OCI-LY7 (cell line): ENCODE measurements at regions of chr5 and their contacts with region 1.

Region 1: GRCh38 chr5:102778478-102778877 is 23.4 kb downstream of the PAM start:
- DNase-seq: no peak
- H3K4me3 ChIP-seq: no peak overlapping the region
- H3K27ac ChIP-seq: no peak overlapping the region
- H3K4me1 ChIP-seq: no peaks in the 10 kb centered on the region
- CTCF ChIP-seq: no peak

Region 2: DNA sequence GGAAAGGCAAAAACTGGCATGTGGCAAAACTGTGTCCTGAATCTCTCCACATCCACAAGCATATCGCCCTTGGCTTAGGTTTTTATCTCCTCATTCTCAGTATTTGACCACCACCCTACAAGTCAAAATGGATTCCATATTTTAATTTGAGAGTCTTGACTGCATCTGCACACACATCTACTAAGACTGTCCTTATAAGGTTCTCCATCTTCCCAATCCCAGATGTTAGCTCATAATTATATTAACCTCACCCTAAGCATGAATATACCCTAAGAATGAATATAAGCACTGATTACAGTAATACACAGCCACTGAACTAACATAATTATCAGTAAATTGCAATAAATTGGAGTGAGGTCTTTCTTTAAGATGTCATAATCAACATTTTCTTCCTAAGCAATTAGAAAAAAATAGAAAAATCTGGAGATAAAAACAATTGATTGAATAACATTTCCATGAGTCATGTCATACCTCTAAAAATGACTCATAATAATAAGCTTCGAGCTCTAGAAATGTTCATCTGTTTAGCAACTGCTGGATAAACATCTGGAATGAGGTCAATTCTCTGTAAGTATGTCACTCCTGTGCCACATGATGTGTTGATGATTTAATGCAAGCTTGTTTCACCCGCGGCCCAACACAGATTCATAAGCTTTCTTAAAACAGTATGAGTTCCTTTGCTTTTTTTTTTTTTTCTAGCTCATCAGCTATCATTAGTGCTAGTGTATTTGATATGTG is 63.2 kb before region 1 on chr5:
- CTCF ChIA-PET with region 1: no interaction called
- POLR2A ChIA-PET with region 1: no interaction called
- intact Hi-C with region 1: no loop called
- DNase-seq: no peak
- H3K4me3 ChIP-seq: no peak overlapping the region
- H3K27ac ChIP-seq: no peak overlapping the region
- H3K4me1 ChIP-seq: no peaks in the 10 kb centered on the region
- CTCF ChIP-seq: no peak

Region 3: GRCh38 chr5:102823441-102823874 is 45.0 kb after region 1 on chr5:
- CTCF ChIA-PET with region 1: no interaction called
- POLR2A ChIA-PET with region 1: no interaction called
- intact Hi-C with region 1: no loop called
- DNase-seq: no peak
- H3K4me3 ChIP-seq: no peak overlapping the region
- H3K27ac ChIP-seq: no peak overlapping the region
- H3K4me1 ChIP-seq: no peaks in the 10 kb centered on the region
- CTCF ChIP-seq: no peak

Region 4: GRCh38 chr5:103041071-103041676 is 262.7 kb after region 1 on chr5:
- CTCF ChIA-PET with region 1: no interaction called
- POLR2A ChIA-PET with region 1: no interaction called
- intact Hi-C with region 1: loop called (anchors 5 kb)
- DNase-seq: peak; percentile 15
- H3K4me3 ChIP-seq: no peak overlapping the region
- H3K27ac ChIP-seq: no peak overlapping the region
- H3K4me1 ChIP-seq: no peaks in the 10 kb centered on the region
- CTCF ChIP-seq: peak; percentile 55

Region 5: DNA sequence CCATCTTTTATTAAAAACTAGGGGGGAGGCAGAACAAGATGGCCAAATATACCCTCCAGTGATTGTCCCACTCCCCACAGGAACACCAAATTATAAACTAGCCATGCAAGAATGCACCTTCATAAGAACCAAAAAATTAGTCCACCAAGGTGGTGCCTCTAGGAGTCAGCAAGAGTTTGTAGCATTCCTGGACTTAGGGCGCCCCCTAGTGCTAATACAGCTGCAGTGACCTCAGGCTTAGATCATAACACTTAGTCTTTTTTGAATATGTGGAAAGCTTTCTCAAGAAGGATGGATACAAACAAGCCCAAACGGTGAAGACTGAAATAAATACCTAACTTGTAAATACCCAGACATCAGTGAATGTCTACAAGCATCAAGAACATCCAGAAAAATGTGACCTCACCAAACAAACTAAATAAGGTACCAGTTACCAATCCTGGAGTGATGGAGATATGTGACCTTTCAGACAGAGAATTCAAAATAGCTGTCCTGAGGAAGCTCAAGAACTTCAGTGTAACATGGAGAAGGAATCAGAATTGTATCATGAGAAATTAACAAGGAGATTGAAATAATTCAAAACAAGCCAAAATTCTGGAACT is 360.9 kb after region 1 on chr5:
- CTCF ChIA-PET with region 1: interaction called, 3 read pairs
- POLR2A ChIA-PET with region 1: no interaction called
- intact Hi-C with region 1: loop called (anchors 1 kb)
- DNase-seq: peak; percentile 79
- H3K4me3 ChIP-seq: no peak overlapping the region
- H3K27ac ChIP-seq: no peak overlapping the region
- H3K4me1 ChIP-seq: no peaks in the 10 kb centered on the region
- CTCF ChIP-seq: peak; percentile 99

Region 6: GRCh38 chr5:103224118-103224893 is 445.8 kb after region 1 on chr5:
- CTCF ChIA-PET with region 1: no interaction called
- POLR2A ChIA-PET with region 1: no interaction called
- intact Hi-C with region 1: loop called (anchors 1 kb)
- DNase-seq: peak; percentile 66
- H3K4me3 ChIP-seq: no peak overlapping the region
- H3K27ac ChIP-seq: no peak overlapping the region
- H3K4me1 ChIP-seq: no peaks in the 10 kb centered on the region
- CTCF ChIP-seq: peak; percentile 81